Tibial artery (tissue), 4 donors: ENCODE measurements at regions of chr16 and their contacts with region 1.

Region 1: DNA sequence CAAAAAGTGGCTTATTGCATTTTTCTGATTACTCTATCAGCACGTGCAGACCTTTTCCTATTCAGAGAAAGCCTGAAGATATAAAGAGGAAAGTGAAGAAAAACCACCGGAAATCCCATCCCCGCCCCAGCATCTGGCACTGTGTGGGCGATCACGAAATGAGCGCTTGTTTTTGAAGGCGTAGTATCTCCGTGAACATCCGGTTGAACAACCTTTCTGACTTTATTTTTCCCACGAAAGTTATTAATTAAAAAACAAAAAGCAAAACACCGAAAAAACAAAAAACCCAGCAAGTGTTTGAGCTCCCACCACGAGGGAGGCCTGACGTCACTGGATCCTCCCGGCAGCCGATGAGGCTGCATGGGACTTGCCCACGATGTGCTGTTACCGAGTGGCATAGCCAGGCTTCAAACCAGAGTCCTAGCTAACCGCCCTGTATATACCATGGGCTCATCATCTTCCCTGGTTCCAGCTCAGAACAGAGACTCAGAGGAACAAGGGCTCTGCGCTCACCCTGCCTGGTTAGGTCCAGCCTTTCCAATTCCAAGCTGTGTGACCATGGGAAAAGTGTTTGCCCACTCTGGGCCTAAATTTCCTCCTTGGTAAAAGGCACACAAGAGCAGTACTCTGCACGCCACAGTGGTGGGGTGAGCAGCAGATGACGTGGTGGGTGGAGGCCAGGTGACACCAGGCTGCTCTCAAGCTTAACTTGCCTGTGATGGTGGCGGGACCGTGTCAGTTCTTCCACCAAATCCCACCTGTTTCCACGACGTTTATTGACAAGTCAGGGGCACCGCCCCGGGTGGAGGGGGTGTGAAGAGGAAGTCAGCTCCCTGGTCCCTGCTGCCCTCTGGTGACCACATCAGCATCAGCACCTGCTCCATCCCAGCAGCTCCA is 34.3 kb upstream of the IL21R start:
- DNase-seq: peak; percentile 83 to 91
- H3K4me3 ChIP-seq: peak overlapping the region; percentile 30 to 45
- H3K27ac ChIP-seq: peak overlapping the region; percentile 59 to 62
- H3K4me1 ChIP-seq: peaks cover 0 to 16% (median 10%) of the 10 kb centered on the region in 4 donors
- H3K27me3 ChIP-seq: no peaks in the 10 kb centered on the region
- CTCF ChIP-seq: peak; percentile 85 to 89

Region 2: GRCh38 chr16:27179500-27180072 is 188.1 kb before region 1 on chr16:
- intact Hi-C with region 1: loop called (anchors 2 kb)
- DNase-seq: peak; percentile 90 to 91
- H3K4me3 ChIP-seq: no peak overlapping the region
- H3K27ac ChIP-seq: no peak overlapping the region
- H3K4me1 ChIP-seq: peaks cover 0 to 4% (median 0%) of the 10 kb centered on the region in 4 donors
- H3K27me3 ChIP-seq: peaks cover 0 to 18% of the 10 kb centered on the region in 2 donors
- CTCF ChIP-seq: peak; percentile 90

Region 3: GRCh38 chr16:27235055-27235937 is 132.4 kb before region 1 on chr16:
- intact Hi-C with region 1: loop called (anchors 2 kb)
- DNase-seq: peak; percentile 91 to 93
- H3K4me3 ChIP-seq: no peak overlapping the region
- H3K27ac ChIP-seq: peak overlapping the region; percentile 59 to 78
- H3K4me1 ChIP-seq: peaks cover 0 to 31% (median 24%) of the 10 kb centered on the region in 4 donors
- H3K27me3 ChIP-seq: no peaks in the 10 kb centered on the region
- CTCF ChIP-seq: peak; percentile 81 to 86

Region 4: GRCh38 chr16:27972500-27972899 is 604.8 kb after region 1 on chr16:
- intact Hi-C with region 1: no loop called
- DNase-seq: no peak
- H3K4me3 ChIP-seq: no peak overlapping the region
- H3K27ac ChIP-seq: no peak overlapping the region
- H3K4me1 ChIP-seq: peaks cover 0 to 12% (median 0%) of the 10 kb centered on the region in 4 donors
- H3K27me3 ChIP-seq: no peaks in the 10 kb centered on the region
- CTCF ChIP-seq: peak; percentile 17 to 31